Gastrocnemius medialis (tissue), 4 donors: ENCODE measurements at regions of chr13 and their contacts with region 1.

Region 1: GRCh38 chr13:99176309-99177276 is 24.1 kb upstream of the UBAC2 start:
- DNase-seq: peak; percentile 39 to 56
- ATAC-seq: peak; percentile 85 to 92
- H3K4me3 ChIP-seq: no peak overlapping the region
- H3K27ac ChIP-seq: no peak overlapping the region
- H3K4me1 ChIP-seq: no peaks in the 10 kb centered on the region
- H3K27me3 ChIP-seq: no peaks in the 10 kb centered on the region
- CTCF ChIP-seq: peak; percentile 78 to 96 (median 92)
- POLR2A ChIP-seq: no peak

Region 2: GRCh38 chr13:99087096-99087953 is 89.3 kb before region 1 on chr13:
- in situ Hi-C with region 1: no loop called
- intact Hi-C with region 1: loop called (anchors 5 kb)
- DNase-seq: peak; percentile 78 to 83
- ATAC-seq: peak; percentile 80 to 82
- H3K4me3 ChIP-seq: peak overlapping the region; percentile 79 to 90 (median 84)
- H3K27ac ChIP-seq: peak overlapping the region; percentile 90 to 96 (median 92)
- H3K4me1 ChIP-seq: peaks cover 6 to 15% of the 10 kb centered on the region in 2 donors
- H3K27me3 ChIP-seq: no peaks in the 10 kb centered on the region
- CTCF ChIP-seq: peak in 2 of 5 experiments; percentile 30 to 37
- POLR2A ChIP-seq: peak; percentile 76 to 78

Region 3: DNA sequence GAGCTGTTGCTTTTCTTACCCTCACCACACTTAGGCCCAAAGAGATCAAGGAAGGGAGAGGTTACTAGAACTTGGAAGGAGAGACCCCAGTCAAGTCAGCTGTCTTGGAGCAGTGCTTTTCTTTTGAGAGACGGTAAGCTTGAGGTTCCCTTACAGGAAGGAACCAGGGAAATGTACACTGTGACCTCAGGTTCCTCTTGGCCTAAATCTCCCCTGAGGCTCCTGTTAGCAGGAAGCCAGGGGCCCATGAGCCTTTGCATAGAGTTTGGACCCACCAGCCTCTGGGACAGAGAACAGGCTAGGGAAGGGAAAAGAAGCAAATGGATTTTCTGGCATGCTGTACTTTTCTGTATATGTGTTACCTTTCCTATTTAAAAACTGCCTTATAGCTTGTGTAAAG is 87.5 kb after region 1 on chr13:
- in situ Hi-C with region 1: loop called (anchors 5 kb)
- intact Hi-C with region 1: loop called (anchors 1 kb)
- DNase-seq: no peak
- ATAC-seq: peak; percentile 15 to 16
- H3K4me3 ChIP-seq: no peak overlapping the region
- H3K27ac ChIP-seq: peak overlapping the region; percentile 57 to 72 (median 62)
- H3K4me1 ChIP-seq: peaks cover 24 to 50% of the 10 kb centered on the region in 2 donors
- H3K27me3 ChIP-seq: no peaks in the 10 kb centered on the region
- CTCF ChIP-seq: no peak
- POLR2A ChIP-seq: no peak

Region 4: DNA sequence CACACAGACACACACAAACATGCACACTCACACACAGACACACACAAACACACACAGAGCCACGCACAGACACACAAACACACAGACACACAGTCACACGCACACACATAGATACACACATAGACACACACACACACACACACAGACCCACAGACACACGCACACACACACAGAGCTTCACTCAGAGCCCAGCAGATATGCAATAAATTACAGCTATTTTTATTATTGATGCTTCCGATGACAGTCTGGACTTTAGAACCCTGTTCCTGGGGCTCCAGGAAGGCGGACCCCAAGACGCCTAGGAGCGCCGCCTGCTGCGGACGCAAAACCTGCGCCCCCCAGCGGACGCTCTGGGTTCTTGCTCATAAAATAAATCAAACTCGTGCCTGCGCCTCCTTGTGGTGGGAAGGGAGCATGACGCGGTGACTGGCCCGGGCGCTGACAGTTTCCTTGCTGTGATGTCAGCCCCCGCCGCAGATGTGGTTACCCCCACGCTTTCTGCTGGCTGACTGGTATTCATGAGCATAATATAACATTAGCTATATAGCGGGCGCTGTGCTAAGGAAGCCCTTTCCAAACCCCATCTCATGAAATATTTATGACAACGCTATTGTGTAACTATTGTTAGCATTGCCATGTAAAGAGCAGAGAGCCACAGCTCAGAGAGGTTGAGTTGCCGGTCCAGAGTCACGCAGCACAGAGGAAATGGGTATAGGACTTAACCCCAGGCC is 260.3 kb after region 1 on chr13:
- in situ Hi-C with region 1: loop called (anchors 5 kb)
- intact Hi-C with region 1: loop called (anchors 1 kb)
- DNase-seq: peak; percentile 58 to 70
- ATAC-seq: peak; percentile 43 to 74
- H3K4me3 ChIP-seq: peak overlapping the region in 1 of 4 donors; percentile 1
- H3K27ac ChIP-seq: no peak overlapping the region
- H3K4me1 ChIP-seq: peaks cover 5 to 6% of the 10 kb centered on the region in 2 donors
- H3K27me3 ChIP-seq: no peaks in the 10 kb centered on the region
- CTCF ChIP-seq: peak; percentile 96 to 100 (median 99)
- POLR2A ChIP-seq: no peak